ENCODE measurements at regions of chr3 and their contacts with region 1.

Region 1: DNA sequence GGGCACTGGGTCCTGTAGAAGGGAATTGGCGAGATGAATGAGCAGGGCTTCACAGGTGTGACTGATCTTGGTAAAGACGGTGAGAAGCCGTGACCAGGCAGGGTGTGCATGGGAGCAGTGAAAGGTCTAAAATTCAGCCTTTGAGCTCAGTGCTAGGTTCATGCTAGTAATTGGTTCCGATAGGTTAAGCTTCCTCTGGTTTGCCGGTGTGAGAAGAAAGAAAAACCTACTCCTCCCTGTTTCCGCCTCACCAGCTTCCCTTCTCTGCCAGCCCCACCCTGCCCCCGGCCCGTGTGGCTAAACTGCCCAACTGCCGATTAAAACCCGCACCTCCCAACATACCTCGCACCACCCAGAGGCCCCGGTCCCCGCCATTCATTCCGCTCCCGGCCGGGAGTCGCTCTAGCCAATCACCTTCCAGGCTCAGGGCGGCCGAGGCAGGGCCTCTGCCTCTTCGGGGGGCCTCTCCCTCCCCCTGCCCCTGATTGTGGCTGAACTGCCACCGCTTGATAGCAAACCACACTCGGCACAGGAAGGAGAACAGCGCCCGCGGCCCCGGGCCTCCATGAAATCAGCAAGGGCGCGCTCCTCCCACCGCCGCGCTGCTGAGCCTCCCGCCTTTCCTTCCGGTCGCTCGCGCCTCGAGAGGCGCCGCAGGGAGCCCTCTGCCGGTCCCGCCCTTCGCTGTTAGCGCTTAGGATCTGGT is 7.3 kb upstream of the NRROS start:
- DNase-seq: peak; percentile 36 to 88
- H3K4me3 ChIP-seq: peak overlapping the region; percentile 61 to 79
- H3K27ac ChIP-seq: peak overlapping the region; percentile 71 to 79
- H3K4me1 ChIP-seq: peaks cover 0 to 8% of the 10 kb centered on the region in 2 donors
- H3K27me3 ChIP-seq: no peaks in the 10 kb centered on the region
- CTCF ChIP-seq: peak in 2 of 3 experiments; percentile 38 to 47

Region 2: GRCh38 chr3:196662711-196663571 is 30.7 kb after region 1 on chr3:
- intact Hi-C with region 1: loop called (anchors 1 kb)
- DNase-seq: no peak
- H3K4me3 ChIP-seq: no peak overlapping the region
- H3K27ac ChIP-seq: no peak overlapping the region
- H3K4me1 ChIP-seq: no peaks in the 10 kb centered on the region
- H3K27me3 ChIP-seq: no peaks in the 10 kb centered on the region
- CTCF ChIP-seq: no peak